Calu3 (cell line): ENCODE measurements at regions of chr12 and their contacts with region 1.

Region 1: GRCh38 chr12:63420206-63420644 is 248.1 kb downstream of the DPY19L2 start:
- DNase-seq: peak; percentile 14
- H3K4me3 Mint-ChIP-seq: no peak overlapping the region
- H3K27ac Mint-ChIP-seq: no peak overlapping the region
- H3K4me1 Mint-ChIP-seq: peaks cover 11% of the 10 kb centered on the region
- H3K27me3 Mint-ChIP-seq: no peaks in the 10 kb centered on the region
- CTCF ChIP-seq: no peak

Region 2: DNA sequence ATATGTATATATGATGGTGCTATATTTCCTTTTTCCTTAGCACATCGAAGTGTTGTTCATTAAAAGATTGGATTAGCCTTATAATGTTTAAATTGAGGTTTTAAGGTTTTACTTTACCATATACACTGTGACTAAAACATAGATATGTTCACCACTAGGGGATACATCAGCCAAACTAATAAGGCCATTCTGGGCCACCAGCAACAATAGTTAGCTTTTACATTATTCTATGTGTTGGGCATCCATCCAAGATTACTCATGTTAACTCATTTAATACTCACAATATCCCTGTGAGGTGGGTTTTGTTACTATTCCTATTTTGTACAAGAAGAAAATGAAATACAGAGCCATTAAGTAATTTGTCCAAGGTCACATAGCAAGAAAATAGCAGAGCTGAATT is 66.7 kb before region 1 on chr12:
- CTCF ChIA-PET with region 1: no interaction called
- intact Hi-C with region 1: loop called (anchors 5 kb)
- DNase-seq: no peak
- H3K4me3 Mint-ChIP-seq: no peak overlapping the region
- H3K27ac Mint-ChIP-seq: peak overlapping the region; percentile 69
- H3K4me1 Mint-ChIP-seq: peaks cover 40% of the 10 kb centered on the region
- H3K27me3 Mint-ChIP-seq: no peaks in the 10 kb centered on the region
- CTCF ChIP-seq: peak; percentile 32